ENCODE measurements at regions of chr9 and their contacts with region 1.

Region 1: GRCh38 chr9:120792898-120793765 is at the start of gene FBXW2:
- DNase-seq: peak; percentile 92
- H3K4me3 Mint-ChIP-seq: peak within 1 kb of the TSS; percentile 88
- H3K27ac Mint-ChIP-seq: peak within 1 kb of the TSS; percentile 92
- H3K4me1 Mint-ChIP-seq: peaks cover 46% of the 10 kb centered on the region
- H3K27me3 Mint-ChIP-seq: no peaks in the 10 kb centered on the region
- total RNA-seq, gene FBXW2: 60.8 to 64.4 TPM

Region 2: GRCh38 chr9:120868676-120869359 is 75.7 kb after region 1 on chr9:
- CTCF ChIA-PET with region 1: interaction called, 4 read pairs
- intact Hi-C with region 1: loop called (anchors 1 kb)
- DNase-seq: peak; percentile 97
- H3K4me3 Mint-ChIP-seq: peak overlapping the region; percentile 74
- H3K27ac Mint-ChIP-seq: peak overlapping the region; percentile 87
- H3K4me1 Mint-ChIP-seq: peaks cover 49% of the 10 kb centered on the region
- H3K27me3 Mint-ChIP-seq: no peaks in the 10 kb centered on the region

Region 3: GRCh38 chr9:121305269-121305994 is 512.3 kb after region 1 on chr9:
- CTCF ChIA-PET with region 1: no interaction called
- intact Hi-C with region 1: no loop called
- DNase-seq: no peak
- H3K4me3 Mint-ChIP-seq: no peak overlapping the region
- H3K27ac Mint-ChIP-seq: no peak overlapping the region
- H3K4me1 Mint-ChIP-seq: peaks cover 4% of the 10 kb centered on the region
- H3K27me3 Mint-ChIP-seq: peaks cover 3% of the 10 kb centered on the region

Measured in activated naive CD4-positive, alpha-beta T cell treated with anti-CD3 and anti-CD28 coated beads for 36 hours (primary cell).